A673 (cell line): ENCODE measurements at regions of chr2 and their contacts with region 1.

Region 1: GRCh38 chr2:211455216-211455841 is 898.9 kb downstream of the CPS1 start:
- DNase-seq: peak; percentile 84
- H3K4me3 ChIP-seq: peak overlapping the region; percentile 4
- H3K27ac ChIP-seq: peak overlapping the region; percentile 54
- H3K4me1 ChIP-seq: peaks cover 26% of the 10 kb centered on the region
- H3K27me3 ChIP-seq: no peaks in the 10 kb centered on the region
- CTCF ChIP-seq: peak; percentile 97

Region 2: DNA sequence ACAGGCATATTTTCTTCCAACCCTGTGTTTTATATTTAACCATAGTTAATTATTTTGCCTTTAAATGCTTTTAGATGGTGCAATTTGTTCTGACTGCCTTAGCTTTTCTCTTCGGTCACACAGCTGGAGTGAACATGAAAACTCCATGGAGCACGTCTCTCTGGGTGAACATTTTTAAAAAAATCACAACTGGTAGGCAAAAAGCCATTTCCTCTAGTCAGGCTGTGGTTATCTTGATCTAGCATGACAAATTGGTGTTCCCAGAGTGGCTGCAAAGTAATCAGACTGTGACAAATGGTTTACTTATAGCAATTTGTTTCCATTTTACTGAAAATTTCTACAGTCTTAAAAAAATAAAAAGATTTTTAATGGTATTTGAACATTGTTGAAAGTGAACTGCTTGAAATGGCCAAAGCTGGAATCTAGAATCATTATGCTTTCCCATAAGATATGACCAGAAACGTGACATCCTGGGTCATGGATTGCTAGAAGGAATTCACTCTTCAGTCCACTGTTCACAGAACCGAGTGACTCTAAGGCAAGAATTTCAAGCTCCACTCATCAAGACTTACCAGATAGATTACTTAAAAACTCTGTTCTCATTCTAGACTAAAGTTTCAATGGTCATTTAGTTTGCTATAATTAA is 195.4 kb before region 1 on chr2:
- CTCF ChIA-PET with region 1: no interaction called
- POLR2A ChIA-PET with region 1: no interaction called
- intact Hi-C with region 1: loop called (anchors 2 kb)
- DNase-seq: peak; percentile 96
- H3K4me3 ChIP-seq: no peak overlapping the region
- H3K27ac ChIP-seq: peak overlapping the region; percentile 100
- H3K4me1 ChIP-seq: peaks cover 21% of the 10 kb centered on the region
- H3K27me3 ChIP-seq: no peaks in the 10 kb centered on the region
- CTCF ChIP-seq: no peak

Region 3: GRCh38 chr2:211503856-211504255 is 48.5 kb after region 1 on chr2:
- CTCF ChIA-PET with region 1: no interaction called
- POLR2A ChIA-PET with region 1: no interaction called
- intact Hi-C with region 1: no loop called
- DNase-seq: no peak
- H3K4me3 ChIP-seq: no peak overlapping the region
- H3K27ac ChIP-seq: no peak overlapping the region
- H3K4me1 ChIP-seq: no peaks in the 10 kb centered on the region
- H3K27me3 ChIP-seq: no peaks in the 10 kb centered on the region
- CTCF ChIP-seq: peak; percentile 44

Region 4: DNA sequence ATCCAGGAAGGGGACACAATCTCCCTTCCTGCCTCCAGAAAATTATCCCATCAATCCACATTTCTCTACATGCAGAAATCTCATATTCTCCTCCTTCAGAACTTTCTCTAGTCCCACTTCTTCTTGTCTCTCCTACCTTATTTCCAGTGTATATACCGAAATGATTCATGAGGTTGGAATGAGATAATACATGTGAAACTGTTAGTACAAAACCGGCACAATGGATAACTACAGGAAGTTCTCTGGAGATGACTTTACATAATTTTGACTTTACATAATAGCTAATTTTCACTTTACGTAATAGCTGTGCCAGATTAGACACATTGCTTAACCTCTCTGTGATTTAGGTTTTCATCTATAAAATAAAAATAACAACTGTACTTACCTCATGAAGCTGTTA is 282.0 kb after region 1 on chr2:
- CTCF ChIA-PET with region 1: no interaction called
- POLR2A ChIA-PET with region 1: no interaction called
- intact Hi-C with region 1: loop called (anchors 5 kb)
- DNase-seq: peak; percentile 78
- H3K4me3 ChIP-seq: no peak overlapping the region
- H3K27ac ChIP-seq: peak overlapping the region; percentile 26
- H3K4me1 ChIP-seq: peaks cover 16% of the 10 kb centered on the region
- H3K27me3 ChIP-seq: no peaks in the 10 kb centered on the region
- CTCF ChIP-seq: no peak